CD8-positive, alpha-beta T cell (primary cell): ENCODE measurements at regions of chr7 and their contacts with region 1.

Region 1: DNA sequence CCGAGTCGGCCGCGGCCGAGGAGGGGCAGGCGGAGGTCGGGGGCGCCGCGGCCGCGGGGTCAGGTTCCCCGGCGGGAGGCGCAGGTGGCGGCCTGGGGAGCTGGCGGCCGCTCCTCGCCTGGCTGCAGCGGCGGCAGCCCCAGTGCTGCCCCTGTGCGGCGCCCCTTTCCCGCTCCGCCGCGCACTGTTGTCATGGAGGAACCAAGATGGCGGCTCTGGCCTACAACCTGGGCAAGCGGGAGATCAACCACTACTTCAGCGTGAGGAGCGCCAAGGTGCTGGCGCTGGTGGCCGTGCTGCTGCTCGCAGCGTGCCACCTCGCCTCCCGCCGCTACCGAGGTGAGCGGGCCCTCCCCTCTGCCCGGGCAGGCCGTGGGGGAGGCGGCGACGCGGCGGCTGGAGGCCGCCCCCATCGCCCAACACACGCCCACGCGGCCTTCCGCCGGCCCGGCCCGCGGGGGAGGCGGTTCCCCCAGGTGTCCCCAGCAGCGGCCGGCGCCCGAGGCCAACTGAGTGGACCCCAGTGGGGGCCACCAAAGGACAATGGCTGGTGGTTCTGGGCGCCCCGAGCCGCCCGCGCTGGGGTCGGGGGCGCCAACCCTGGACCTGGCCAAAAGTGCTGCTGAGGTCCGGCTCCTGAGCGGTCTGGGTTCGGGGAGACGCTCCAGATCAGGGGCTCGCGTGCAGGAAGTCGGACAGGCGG is 421 bp downstream of the CASD1 start:
- DNase-seq: peak; percentile 33 to 84 (median 68)
- ATAC-seq: peak; percentile 75
- H3K4me3 ChIP-seq: peak overlapping the region; percentile 78 to 79
- H3K4me3 Mint-ChIP-seq: peak overlapping the region; percentile 87
- H3K27ac ChIP-seq: peak overlapping the region; percentile 75 to 89
- H3K27ac Mint-ChIP-seq: peak overlapping the region; percentile 94
- H3K4me1 ChIP-seq: peaks cover 37% of the 10 kb centered on the region
- H3K4me1 Mint-ChIP-seq: peaks cover 47% of the 10 kb centered on the region
- H3K27me3 ChIP-seq: no peaks in the 10 kb centered on the region
- H3K27me3 Mint-ChIP-seq: no peaks in the 10 kb centered on the region
- CTCF ChIP-seq: no peak

Region 2: GRCh38 chr7:93117852-93118530 is 1392.0 kb before region 1 on chr7 and contains the start of gene SAMD9:
- CTCF ChIA-PET with region 1: no interaction called
- POLR2A ChIA-PET with region 1: no interaction called
- intact Hi-C with region 1: loop called in 1 of 2 experiments (anchors 5 kb)
- DNase-seq: peak; percentile 18 to 91 (median 60)
- ATAC-seq: peak; percentile 99
- H3K4me3 ChIP-seq: peak within 1 kb of the TSS; percentile 61 to 64
- H3K4me3 Mint-ChIP-seq: peak within 1 kb of the TSS; percentile 80
- H3K27ac ChIP-seq: peak within 1 kb of the TSS; percentile 58 to 81
- H3K27ac Mint-ChIP-seq: peak within 1 kb of the TSS; percentile 84
- H3K4me1 ChIP-seq: peaks cover 28% of the 10 kb centered on the region
- H3K4me1 Mint-ChIP-seq: peaks cover 47% of the 10 kb centered on the region
- H3K27me3 ChIP-seq: no peaks in the 10 kb centered on the region
- H3K27me3 Mint-ChIP-seq: no peaks in the 10 kb centered on the region
- CTCF ChIP-seq: no peak
- total RNA-seq, gene SAMD9: 23.5 to 23.8 TPM

Region 3: DNA sequence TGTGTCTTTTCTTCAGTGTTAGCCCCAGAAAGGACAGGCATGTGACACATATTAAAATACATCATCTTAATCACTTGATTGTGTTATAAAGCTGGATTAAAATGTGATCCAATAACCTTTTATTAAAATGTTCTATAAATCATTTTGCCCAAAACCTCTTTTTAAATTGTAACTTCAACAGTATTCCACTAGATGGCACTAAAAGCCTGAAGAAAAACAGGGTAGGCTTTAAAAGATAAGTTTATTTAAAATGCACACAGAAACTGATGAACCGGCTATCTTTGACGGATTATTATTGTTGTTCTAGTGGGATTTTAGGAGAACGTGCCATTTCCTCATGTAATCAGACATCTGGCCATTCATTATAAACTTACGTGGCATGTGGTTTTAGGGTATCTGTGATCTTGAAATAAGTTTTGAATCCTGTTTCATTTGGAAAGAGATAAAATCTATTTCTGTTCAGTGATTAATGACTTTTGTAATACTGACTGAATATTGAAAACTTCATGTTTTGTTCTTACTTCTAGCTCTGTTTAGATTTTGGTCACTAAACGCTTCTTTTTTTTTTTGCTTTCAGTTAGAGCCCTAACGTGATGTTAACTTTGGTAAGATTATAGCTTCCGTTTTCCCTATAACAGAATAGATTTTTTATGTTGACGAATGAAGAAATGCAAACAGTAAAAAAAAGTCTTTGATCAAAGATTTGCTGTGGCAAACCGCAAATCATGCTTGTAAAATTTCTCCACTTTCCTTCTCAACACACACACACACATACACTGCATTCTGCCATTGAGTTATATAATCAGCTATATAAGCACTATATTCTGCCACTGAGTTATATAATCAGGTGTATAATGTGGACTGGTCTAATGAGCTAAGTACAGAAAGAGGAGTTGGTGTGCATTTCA is 1264.3 kb before region 1 on chr7:
- CTCF ChIA-PET with region 1: no interaction called
- POLR2A ChIA-PET with region 1: no interaction called
- intact Hi-C with region 1: loop called in 1 of 2 experiments (anchors 5 kb)
- DNase-seq: peak in 2 of 9 experiments; percentile 42 to 56
- ATAC-seq: peak; percentile 72
- H3K4me3 ChIP-seq: peak overlapping the region in 1 of 2 experiments; percentile 6
- H3K4me3 Mint-ChIP-seq: peak overlapping the region; percentile 72
- H3K27ac ChIP-seq: no peak overlapping the region
- H3K27ac Mint-ChIP-seq: no peak overlapping the region
- H3K4me1 ChIP-seq: no peaks in the 10 kb centered on the region
- H3K4me1 Mint-ChIP-seq: peaks cover 14% of the 10 kb centered on the region
- H3K27me3 ChIP-seq: no peaks in the 10 kb centered on the region
- H3K27me3 Mint-ChIP-seq: no peaks in the 10 kb centered on the region
- CTCF ChIP-seq: peak; percentile 84

Region 4: GRCh38 chr7:94449148-94449725 is 60.8 kb before region 1 on chr7:
- CTCF ChIA-PET with region 1: no interaction called
- POLR2A ChIA-PET with region 1: interaction called, 3 read pairs
- intact Hi-C with region 1: loop called in 1 of 2 experiments (anchors 5 kb)
- DNase-seq: peak in 2 of 9 experiments; percentile 34 to 52
- ATAC-seq: peak; percentile 36
- H3K4me3 ChIP-seq: no peak overlapping the region
- H3K4me3 Mint-ChIP-seq: no peak overlapping the region
- H3K27ac ChIP-seq: no peak overlapping the region
- H3K27ac Mint-ChIP-seq: no peak overlapping the region
- H3K4me1 ChIP-seq: no peaks in the 10 kb centered on the region
- H3K4me1 Mint-ChIP-seq: no peaks in the 10 kb centered on the region
- H3K27me3 ChIP-seq: no peaks in the 10 kb centered on the region
- H3K27me3 Mint-ChIP-seq: peaks cover 10% of the 10 kb centered on the region
- CTCF ChIP-seq: peak; percentile 73

Region 5: DNA sequence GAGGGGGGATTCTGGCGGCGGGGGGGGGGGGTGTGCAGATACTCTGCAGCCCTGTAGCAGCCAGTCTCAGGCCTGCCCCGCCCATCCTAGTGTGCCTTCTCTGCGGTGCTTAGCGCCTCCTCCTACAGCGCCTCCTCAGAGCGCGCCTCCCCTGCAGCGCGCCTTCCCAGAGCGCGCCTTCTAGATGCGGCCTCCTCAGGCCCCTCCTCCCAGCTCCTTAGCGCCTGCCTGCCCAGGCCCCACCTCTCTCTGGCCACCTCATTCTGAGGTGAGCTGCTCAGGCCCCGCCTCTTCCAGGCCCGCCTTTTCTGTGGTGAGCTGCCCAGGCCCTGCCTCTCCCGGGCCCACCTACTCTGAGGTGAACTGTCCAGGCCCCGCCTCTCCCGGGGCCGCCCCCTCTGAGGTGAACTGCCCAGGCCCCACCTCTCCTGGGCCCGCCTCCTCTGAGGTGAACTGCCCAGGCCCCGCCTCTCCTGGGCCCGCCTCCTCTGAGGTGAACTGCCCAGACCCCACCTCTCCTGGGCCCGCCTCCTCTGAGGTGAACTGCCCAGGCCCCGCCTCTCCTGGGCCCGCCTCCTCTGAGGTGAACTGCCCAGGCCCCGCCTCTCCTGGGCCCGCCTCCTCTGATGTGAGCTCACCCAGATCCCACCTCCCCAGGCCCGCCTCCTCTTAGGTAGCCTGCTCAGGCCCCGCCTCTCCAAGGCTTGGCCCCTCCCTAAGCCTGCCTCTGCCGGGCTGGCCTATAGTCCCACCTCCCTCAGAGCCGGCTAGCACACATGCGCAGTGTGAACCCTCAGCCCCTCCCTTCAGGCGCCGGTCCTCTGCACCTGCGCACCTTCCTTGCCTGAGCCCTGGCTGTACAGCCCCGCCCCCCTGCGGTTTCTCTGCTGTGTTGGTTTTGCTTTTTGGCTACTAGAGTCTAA is 148.0 kb after region 1 on chr7:
- CTCF ChIA-PET with region 1: no interaction called
- POLR2A ChIA-PET with region 1: interaction called, 4 read pairs
- intact Hi-C with region 1: loop called (anchors 1 to 2 kb)
- DNase-seq: peak; percentile 85 to 97 (median 93)
- ATAC-seq: peak; percentile 81
- H3K4me3 ChIP-seq: peak overlapping the region in 1 of 2 experiments; percentile 51
- H3K4me3 Mint-ChIP-seq: peak overlapping the region; percentile 89
- H3K27ac ChIP-seq: no peak overlapping the region
- H3K27ac Mint-ChIP-seq: no peak overlapping the region
- H3K4me1 ChIP-seq: peaks cover 29% of the 10 kb centered on the region
- H3K4me1 Mint-ChIP-seq: peaks cover 28% of the 10 kb centered on the region
- H3K27me3 ChIP-seq: peaks cover 18 to 19% of the 10 kb centered on the region in 2 experiments
- H3K27me3 Mint-ChIP-seq: peaks cover 18% of the 10 kb centered on the region
- CTCF ChIP-seq: no peak